WTC11 (cell line): ENCODE measurements at regions of chr1 and their contacts with region 1.

Region 1: DNA sequence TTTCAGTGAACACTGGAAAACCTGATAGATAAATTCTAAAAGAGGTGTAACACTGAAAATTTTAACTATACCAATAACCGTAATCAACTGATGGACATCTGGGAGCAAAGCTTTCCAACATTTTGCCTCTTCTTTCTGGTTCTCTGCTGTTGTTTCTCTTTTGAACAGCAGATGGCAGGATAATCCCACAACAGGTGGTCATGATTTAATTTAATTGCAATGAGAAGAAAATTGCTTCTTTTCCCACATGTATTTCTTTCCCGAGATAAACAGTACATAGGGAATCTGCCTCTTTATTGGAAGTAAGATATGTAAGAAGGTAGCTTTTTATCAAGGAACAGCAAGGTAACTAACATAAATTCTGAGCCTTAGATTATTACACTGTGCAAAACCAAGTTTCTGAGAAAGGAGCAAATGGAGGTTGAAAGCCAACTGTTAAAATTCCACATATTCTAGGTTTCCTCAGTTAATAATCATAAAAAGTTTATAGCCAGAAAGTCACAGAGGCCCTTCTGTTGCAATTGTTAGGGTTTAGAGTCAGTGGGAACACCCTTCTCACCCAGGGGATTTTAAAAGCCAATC is 72.9 kb downstream of the RPS6KA1 start:
- DNase-seq: no peak
- ATAC-seq: no peak
- H3K4me3 Mint-ChIP-seq: no peak overlapping the region
- H3K27ac Mint-ChIP-seq: no peak overlapping the region
- H3K4me1 Mint-ChIP-seq: peaks cover 23% of the 10 kb centered on the region
- H3K27me3 Mint-ChIP-seq: no peaks in the 10 kb centered on the region; the same call in 1 of the 2 replicates
- CTCF ChIP-seq: peak; percentile 61; the same call in 1 of the 2 replicates

Region 2: DNA sequence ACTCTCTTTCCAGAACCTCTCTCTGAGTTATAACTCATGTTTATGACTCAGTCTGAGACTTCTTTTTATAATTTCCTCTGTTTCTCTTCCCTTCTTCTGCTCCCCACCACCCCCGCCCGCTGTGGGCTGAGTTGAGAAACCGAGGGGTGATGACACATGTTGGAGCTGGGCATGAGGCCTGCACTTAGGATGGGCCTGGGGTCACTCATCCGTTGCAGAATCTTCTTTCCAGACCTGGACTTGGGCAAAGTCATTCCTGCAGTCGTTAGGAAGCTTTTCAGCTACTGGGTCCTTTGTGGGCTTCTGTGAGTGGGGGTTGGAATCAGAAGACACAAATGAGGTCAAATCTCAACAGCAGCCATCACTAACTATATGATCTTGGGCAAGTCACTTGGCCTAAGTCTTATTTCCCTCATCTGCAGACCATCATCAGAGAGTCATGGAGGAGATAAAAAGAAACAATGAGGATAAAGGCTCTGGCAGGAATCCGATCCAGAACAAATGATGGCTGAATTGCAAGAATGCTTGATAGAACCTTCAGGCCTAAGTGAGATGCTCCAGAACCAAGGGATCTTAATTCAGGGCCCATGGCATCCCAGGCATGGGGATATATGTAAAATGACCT is 19.5 kb before region 1 on chr1:
- CTCF ChIA-PET with region 1: interaction called, 15 read pairs
- POLR2A ChIA-PET with region 1: no interaction called
- DNase-seq: no peak
- ATAC-seq: no peak
- H3K4me3 Mint-ChIP-seq: no peak overlapping the region
- H3K27ac Mint-ChIP-seq: no peak overlapping the region
- H3K4me1 Mint-ChIP-seq: no peaks in the 10 kb centered on the region
- H3K27me3 Mint-ChIP-seq: no peaks in the 10 kb centered on the region
- CTCF ChIP-seq: no peak

Region 3: GRCh38 chr1:26614655-26615411 is 12.4 kb after region 1 on chr1:
- CTCF ChIA-PET with region 1: interaction called, 26 read pairs
- POLR2A ChIA-PET with region 1: no interaction called
- DNase-seq: no peak
- ATAC-seq: no peak
- H3K4me3 Mint-ChIP-seq: no peak overlapping the region
- H3K27ac Mint-ChIP-seq: no peak overlapping the region
- H3K4me1 Mint-ChIP-seq: peaks cover 46% of the 10 kb centered on the region
- H3K27me3 Mint-ChIP-seq: peaks cover 19% of the 10 kb centered on the region
- CTCF ChIP-seq: no peak

Region 4: DNA sequence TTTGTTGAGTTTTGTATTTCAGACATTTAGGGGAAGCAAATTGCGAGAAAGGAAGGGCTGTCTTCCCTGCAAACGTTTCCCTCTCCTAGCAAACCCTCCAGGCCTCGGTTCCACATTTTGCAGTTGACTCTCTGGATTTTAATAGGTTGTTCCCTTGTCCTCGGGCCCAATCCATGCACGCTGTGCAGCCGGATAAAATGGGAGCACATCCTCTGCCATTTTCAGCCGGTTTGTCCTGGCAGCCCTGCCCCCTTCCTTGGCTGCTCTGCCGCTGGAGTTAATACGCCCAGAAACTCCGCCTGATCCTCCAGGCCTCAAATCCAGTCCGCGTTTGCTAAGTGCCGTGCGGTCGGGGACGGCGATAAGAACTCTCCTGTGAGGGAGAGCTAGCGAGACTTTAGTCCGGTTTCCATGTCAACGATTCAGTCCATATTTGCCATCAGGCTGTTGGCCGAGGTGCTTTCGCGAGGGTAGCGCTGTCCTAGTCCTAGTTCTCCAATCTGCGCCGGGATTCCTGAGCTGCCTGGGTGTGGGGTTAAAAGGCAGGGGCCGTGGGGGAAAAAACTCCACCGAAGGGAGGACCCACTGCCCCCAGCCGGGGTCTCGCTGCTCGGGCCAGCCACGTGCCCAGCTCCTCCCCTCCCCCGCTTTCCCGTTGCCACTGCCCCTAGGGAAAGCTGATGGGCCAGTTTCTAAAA is 90.5 kb after region 1 on chr1:
- CTCF ChIA-PET with region 1: interaction called, 14 read pairs
- POLR2A ChIA-PET with region 1: no interaction called
- DNase-seq: peak; percentile 93
- ATAC-seq: peak; percentile 65
- H3K4me3 Mint-ChIP-seq: peak overlapping the region; percentile 86
- H3K27ac Mint-ChIP-seq: peak overlapping the region; percentile 100
- H3K4me1 Mint-ChIP-seq: peaks cover 34% of the 10 kb centered on the region
- H3K27me3 Mint-ChIP-seq: no peaks in the 10 kb centered on the region
- CTCF ChIP-seq: no peak

Region 5: DNA sequence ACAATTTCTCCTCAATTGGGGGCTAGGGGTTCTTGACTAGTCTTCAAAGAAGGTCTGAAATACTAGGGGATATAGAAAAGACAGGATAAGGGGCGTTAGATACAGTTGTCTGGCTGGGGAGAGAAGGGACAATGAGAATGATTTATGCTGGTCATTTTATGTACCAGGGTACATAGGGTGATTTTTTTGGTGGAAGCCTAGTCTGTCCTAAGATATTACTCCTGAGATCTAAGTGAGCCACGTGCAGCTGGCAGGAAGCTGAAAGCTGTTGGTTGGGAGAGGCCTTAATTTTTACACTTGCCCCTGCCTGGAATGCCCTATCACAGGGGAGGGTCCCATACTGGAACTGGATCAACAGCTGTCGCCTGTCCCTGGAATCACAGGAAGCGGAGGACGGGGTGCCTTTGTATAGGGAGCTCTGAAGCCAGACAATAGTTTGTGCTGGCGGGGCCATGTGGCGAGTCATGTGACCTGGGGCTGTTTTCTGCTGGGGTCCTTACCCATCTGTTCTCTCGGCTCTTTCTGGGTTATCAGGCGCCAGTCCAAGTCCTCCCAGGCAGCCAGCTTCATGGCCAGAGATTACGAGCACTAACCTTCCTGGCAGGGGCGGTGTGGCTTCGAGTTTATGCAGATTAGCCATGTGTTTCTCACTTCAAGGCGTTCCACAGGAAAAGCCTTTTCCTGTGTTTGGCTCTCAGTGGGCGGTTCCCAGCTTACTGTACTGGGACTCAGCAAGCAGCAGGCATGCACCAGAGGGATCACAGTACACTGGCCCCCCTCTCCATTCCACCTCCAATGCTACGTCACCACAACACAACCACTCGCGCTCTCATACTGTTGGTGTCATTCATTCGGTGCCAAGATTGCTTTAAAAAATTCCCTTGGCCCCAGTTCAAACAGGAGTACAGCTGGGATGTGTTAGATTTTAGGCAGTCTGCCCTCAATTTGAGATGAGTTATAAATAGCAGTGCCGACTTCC is 120.8 kb after region 1 on chr1:
- CTCF ChIA-PET with region 1: interaction called, 10 read pairs
- POLR2A ChIA-PET with region 1: interaction called, 10 read pairs
- DNase-seq: peak; percentile 72
- ATAC-seq: peak; percentile 80
- H3K4me3 Mint-ChIP-seq: peak overlapping the region; percentile 59
- H3K27ac Mint-ChIP-seq: peak overlapping the region; percentile 78
- H3K4me1 Mint-ChIP-seq: peaks cover 82% of the 10 kb centered on the region
- H3K27me3 Mint-ChIP-seq: no peaks in the 10 kb centered on the region
- CTCF ChIP-seq: no peak

Region 6: GRCh38 chr1:26907071-26907917 is 304.8 kb after region 1 on chr1:
- CTCF ChIA-PET with region 1: no interaction called
- POLR2A ChIA-PET with region 1: no interaction called
- DNase-seq: no peak
- ATAC-seq: no peak
- H3K4me3 Mint-ChIP-seq: no peak overlapping the region
- H3K27ac Mint-ChIP-seq: 0 out of 2 replicates have a peak overlapping the region, but pooled peaks have one; percentile 2
- H3K4me1 Mint-ChIP-seq: no peaks in the 10 kb centered on the region
- H3K27me3 Mint-ChIP-seq: peaks cover 10% of the 10 kb centered on the region; the same call in 1 of the 2 replicates
- CTCF ChIP-seq: no peak